Heart left ventricle (tissue), 16 donors: ENCODE measurements at regions of chr19 and their contacts with region 1.

Region 1: GRCh38 chr19:57527136-57527881 is at the start of gene ZNF549:
- DNase-seq: peak; percentile 89 to 93 (median 91)
- ATAC-seq: peak; percentile 100
- H3K4me3 ChIP-seq: peak within 1 kb of the TSS; percentile 69 to 98 (median 84)
- H3K27ac ChIP-seq: peak within 1 kb of the TSS; percentile 59 to 91 (median 84)
- H3K4me1 ChIP-seq: peaks cover 0 to 16% (median 13%) of the 10 kb centered on the region in 12 donors
- H3K27me3 ChIP-seq: no peaks in the 10 kb centered on the region
- CTCF ChIP-seq: no peak
- POLR2A ChIP-seq: peak in 1 of 2 donors; percentile 46
- total RNA-seq, gene ZNF549: 2.5 to 5.2 (median 3.7) TPM

Region 2: DNA sequence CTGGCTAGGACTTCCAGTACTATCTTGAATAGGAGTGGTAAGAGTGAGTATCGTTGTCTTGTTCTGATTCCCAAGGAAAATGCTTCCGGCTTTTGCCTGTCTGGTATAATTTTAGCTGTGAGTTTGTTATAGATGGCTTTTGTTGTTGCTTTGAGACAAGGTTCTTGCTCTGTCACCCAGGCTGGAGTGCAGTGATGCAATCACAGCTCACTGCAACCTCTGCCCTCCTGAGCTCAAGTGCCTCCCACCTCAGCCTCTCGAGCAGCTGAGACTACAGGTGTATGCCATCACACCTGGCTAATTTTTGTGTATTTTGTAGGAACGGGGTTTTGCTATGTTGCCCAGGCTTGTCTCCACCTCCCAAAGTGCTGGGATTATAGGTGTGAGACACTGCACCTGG is 213.2 kb before region 1 on chr19:
- intact Hi-C with region 1: no loop called
- DNase-seq: no peak
- ATAC-seq: no peak
- H3K4me3 ChIP-seq: no peak overlapping the region
- H3K27ac ChIP-seq: no peak overlapping the region
- H3K4me1 ChIP-seq: no peaks in the 10 kb centered on the region
- H3K27me3 ChIP-seq: peaks cover 0 to 28% (median 0%) of the 10 kb centered on the region in 9 donors
- CTCF ChIP-seq: no peak
- POLR2A ChIP-seq: no peak

Region 3: GRCh38 chr19:57559404-57560025 is 32.2 kb after region 1 on chr19 and contains the start of gene ZNF550:
- intact Hi-C with region 1: loop called in 2 of 10 experiments (anchors 2 to 5 kb)
- DNase-seq: peak; percentile 92 to 95 (median 94)
- ATAC-seq: peak; percentile 97 to 99 (median 99)
- H3K4me3 ChIP-seq: peak within 1 kb of the TSS; percentile 63 to 98 (median 82)
- H3K27ac ChIP-seq: peak within 1 kb of the TSS; percentile 16 to 90 (median 79)
- H3K4me1 ChIP-seq: peaks cover 5 to 42% (median 16%) of the 10 kb centered on the region in 12 donors
- H3K27me3 ChIP-seq: no peaks in the 10 kb centered on the region
- CTCF ChIP-seq: no peak
- POLR2A ChIP-seq: peak in 1 of 2 donors; percentile 64
- total RNA-seq, gene ZNF550: 3.6 to 10.1 (median 7.0) TPM